ENCODE measurements at regions of chr7 and their contacts with region 1.

Region 1: DNA sequence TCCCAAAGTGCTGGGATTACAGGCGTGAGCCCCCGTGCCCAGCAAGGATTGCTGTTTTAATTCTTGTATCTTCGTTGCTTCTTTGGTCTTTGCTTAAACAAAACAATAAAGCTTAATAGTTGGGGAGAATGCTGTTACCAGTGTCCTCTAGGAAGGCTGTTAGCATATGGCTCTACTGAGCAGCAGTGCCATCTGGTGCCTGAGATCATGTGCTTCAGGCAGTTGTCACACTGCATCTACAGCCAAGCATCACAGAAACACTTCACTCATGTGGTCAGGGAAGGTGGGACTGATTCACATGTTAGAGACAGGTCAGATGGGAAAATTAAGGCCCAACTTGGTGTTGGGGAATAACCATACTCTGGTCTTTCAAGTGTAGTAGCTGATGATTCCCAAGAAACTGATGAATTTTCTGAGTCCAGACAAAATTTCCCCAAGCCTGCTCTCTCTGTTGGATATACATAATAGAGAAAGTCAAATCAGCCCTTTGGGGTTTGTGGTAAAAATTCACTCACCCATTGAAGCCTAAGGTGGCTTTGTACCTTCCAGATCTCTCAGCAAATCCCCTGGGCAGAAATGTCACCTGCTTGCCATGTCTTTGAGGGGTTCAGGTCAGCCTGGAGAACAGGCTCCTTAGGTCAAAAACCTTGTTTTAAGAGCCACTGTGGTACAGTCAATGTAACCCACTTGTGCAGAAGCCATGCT is 28.4 kb downstream of the UBE2D4 start:
- DNase-seq: peak; percentile 53 to 65
- ATAC-seq: peak; percentile 96 to 97
- H3K4me3 ChIP-seq: no peak overlapping the region
- H3K27ac ChIP-seq: no peak overlapping the region
- H3K4me1 ChIP-seq: no peaks in the 10 kb centered on the region
- CTCF ChIP-seq: peak; percentile 39
- EP300 ChIP-seq: no peak
- POLR2A ChIP-seq: no peak
- RAD21 ChIP-seq: peak; percentile 39 to 64; a peak in 2 of 5 replicates

Region 2: DNA sequence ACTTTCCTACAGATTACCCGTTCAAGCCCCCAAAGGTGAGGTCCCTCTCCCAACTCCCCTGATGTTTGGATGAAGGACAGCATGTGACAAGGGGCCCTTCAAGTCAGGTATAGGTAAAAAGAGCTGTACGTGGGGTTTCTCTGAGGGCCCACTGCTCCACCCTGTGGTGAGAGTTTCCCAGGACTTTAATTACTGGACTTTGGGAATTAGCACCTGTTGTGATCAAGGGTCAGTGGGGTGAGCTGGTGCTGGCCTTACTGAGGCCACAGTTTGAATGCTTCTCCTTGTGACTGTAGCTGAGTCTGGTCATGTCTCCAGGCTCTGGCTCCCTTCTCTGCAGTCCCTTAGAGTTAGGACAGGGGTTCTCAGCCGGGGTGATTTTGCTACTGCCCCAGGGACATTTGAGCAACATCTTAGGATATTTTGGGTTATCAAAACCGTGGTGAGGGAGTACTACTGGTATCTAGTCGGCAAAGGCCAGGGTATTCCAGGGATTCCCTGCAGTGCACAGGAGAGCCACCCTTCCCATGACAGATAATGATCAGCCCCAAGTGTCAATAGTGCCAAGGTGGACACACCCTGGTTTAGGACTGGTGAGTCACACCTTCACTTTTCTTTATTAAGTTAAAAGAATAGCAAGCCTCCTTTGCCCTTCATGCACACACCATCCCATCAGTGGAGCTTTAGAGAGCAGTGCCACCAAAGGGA is 11.5 kb before region 1 on chr7:
- CTCF ChIA-PET with region 1: interaction called, 15 read pairs
- POLR2A ChIA-PET with region 1: no interaction called
- DNase-seq: no peak
- ATAC-seq: peak; percentile 26 to 59; a peak in 4 of 6 replicates
- H3K4me3 ChIP-seq: no peak overlapping the region
- H3K27ac ChIP-seq: no peak overlapping the region
- H3K4me1 ChIP-seq: peaks cover 7% of the 10 kb centered on the region; the same call in 2 of the 3 replicates
- CTCF ChIP-seq: peak; percentile 17; the same call in 1 of the 3 replicates
- EP300 ChIP-seq: no peak
- POLR2A ChIP-seq: no peak
- RAD21 ChIP-seq: peak in 1 of 2 experiments; percentile 34; a peak in 2 of 5 replicates

Region 3: DNA sequence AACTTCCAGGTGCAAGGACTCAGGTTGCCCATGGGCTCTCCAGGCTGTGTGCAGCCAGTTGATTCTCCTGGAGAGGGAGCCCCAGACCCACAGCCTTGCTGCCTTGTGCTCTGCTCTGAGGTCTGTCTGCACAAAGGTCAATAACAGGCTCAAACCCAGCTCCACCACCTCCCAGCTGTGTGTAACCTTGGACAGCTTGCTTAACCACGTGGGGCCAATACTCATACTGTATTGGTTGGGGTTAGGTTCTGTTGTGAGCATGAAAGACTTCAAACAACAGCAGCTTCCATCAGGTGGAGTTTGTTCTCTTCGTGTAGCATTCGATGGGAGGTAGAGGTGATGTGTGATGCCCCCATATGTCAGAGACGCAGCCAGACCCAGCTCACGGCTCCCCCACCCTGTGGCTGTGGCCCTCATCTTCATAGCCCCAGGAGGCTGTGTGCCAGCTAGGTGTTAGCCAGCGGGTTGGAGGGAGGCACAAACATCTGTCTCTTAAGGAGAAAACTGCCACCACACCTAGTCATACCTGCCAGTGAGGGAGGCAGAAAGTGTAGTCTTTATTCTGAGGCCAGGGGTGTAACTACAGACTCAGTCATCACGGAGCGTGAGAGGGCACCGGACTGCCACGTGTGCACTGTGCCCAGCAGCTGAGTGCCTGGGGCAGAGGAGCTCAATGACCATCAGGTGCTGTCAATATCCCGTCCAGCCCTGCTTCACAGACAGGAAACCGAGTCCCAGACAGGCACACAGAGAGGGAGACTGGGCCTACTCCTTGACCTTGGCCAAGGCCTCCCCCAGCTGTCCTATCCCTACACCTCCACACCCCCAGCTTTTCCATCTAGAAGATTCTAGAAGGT is 176.7 kb after region 1 on chr7:
- CTCF ChIA-PET with region 1: no interaction called
- POLR2A ChIA-PET with region 1: no interaction called
- DNase-seq: peak in 1 of 2 experiments; percentile 40
- ATAC-seq: peak; percentile 80 to 90
- H3K4me3 ChIP-seq: no peak overlapping the region
- H3K27ac ChIP-seq: no peak overlapping the region
- H3K4me1 ChIP-seq: no peaks in the 10 kb centered on the region
- CTCF ChIP-seq: peak; percentile 39
- EP300 ChIP-seq: no peak
- POLR2A ChIP-seq: no peak
- RAD21 ChIP-seq: peak; percentile 46 to 67; a peak in 3 of 5 replicates